IMR-90 (cell line): ENCODE measurements at regions of chr14 and their contacts with region 1.

Region 1: GRCh38 chr14:102893452-102893851 is 29.0 kb upstream of the AMN start:
- DNase-seq: peak; percentile 99
- ATAC-seq: peak; percentile 96
- H3K4me3 ChIP-seq: no peak overlapping the region
- H3K27ac ChIP-seq: no peak overlapping the region
- H3K4me1 ChIP-seq: peaks cover 4% of the 10 kb centered on the region; the same call in 1 of the 2 replicates
- H3K27me3 ChIP-seq: no peaks in the 10 kb centered on the region
- CTCF ChIP-seq: no peak
- POLR2A ChIP-seq: no peak
- RAD21 ChIP-seq: no peak

Region 2: GRCh38 chr14:102774391-102775153 is 118.9 kb before region 1 on chr14:
- CTCF ChIA-PET with region 1: no interaction called
- POLR2A ChIA-PET with region 1: no interaction called
- dilution Hi-C with region 1: no loop called
- in situ Hi-C with region 1: no loop called
- intact Hi-C with region 1: loop called (anchors 1 kb)
- DNase-seq: peak; percentile 78
- ATAC-seq: peak; percentile 56
- H3K4me3 ChIP-seq: no peak overlapping the region
- H3K27ac ChIP-seq: no peak overlapping the region
- H3K4me1 ChIP-seq: peaks cover 10% of the 10 kb centered on the region
- H3K27me3 ChIP-seq: peaks cover 3% of the 10 kb centered on the region; the same call in 1 of the 2 replicates
- CTCF ChIP-seq: peak; percentile 85
- POLR2A ChIP-seq: no peak
- RAD21 ChIP-seq: peak; percentile 76

Region 3: DNA sequence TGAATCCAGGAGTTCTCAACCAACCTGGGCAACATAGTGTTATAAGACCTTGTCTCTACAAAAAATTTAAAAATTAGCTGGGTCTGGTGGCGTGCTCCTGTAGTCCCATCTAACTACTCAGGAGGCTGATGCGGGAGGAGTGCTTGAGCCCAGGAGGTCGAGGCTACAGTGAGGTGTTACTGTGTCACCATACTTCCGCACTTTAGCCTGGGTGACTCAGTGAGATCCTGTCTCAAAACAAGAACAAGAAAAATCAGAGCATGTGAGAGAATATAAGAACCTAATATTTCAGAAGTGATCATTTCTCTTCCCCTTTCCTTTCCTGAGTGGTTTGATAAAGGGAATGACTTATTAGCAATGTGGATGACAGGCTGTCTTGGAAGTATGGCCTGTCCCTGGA is 106.7 kb before region 1 on chr14:
- CTCF ChIA-PET with region 1: no interaction called
- POLR2A ChIA-PET with region 1: no interaction called
- dilution Hi-C with region 1: no loop called
- in situ Hi-C with region 1: loop called (anchors 10 kb)
- intact Hi-C with region 1: no loop called
- DNase-seq: peak; percentile 47
- ATAC-seq: no peak
- H3K4me3 ChIP-seq: no peak overlapping the region
- H3K27ac ChIP-seq: no peak overlapping the region
- H3K4me1 ChIP-seq: peaks cover 11% of the 10 kb centered on the region
- H3K27me3 ChIP-seq: no peaks in the 10 kb centered on the region
- CTCF ChIP-seq: no peak
- POLR2A ChIP-seq: no peak
- RAD21 ChIP-seq: no peak

Region 4: DNA sequence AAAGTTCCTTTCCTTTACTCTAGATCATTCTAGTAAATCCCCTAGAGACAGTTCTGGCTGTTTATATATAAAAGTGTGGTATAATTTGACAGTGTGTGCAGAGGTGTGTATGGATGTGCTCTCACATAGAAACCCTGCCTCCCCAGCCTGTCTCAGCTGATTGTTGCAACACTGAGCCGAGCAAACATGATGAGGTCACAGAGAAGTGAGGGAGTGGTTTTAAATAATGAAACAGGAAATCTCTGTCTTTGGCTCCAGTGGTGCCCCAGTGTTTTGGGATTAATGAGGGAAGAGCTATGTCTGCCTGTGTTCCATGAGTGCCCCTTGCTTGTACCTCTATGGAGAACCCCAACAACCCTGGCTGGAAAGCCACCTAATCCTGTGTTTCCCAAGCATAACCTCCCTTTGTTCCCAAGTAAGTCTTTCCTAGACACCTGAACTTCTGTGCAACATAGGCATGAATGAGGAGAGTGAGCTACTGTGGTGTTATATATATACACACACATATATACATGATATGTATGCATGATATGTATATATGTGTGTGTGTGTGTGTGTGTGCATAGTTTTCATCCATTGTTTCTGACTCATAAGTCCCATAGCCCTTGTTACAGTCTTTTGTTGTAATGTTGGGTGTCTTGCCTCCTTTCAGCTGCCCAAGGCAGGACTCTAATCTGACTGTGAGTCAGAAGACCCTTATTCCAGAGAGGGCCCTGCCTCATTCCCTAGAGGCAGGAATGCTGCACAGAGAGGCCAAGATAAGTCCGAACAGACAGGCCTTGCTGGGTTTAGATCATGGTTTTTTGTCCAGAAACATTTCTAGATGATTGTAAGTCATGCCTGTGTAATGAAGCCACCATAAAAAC is 98.2 kb before region 1 on chr14:
- CTCF ChIA-PET with region 1: no interaction called
- POLR2A ChIA-PET with region 1: no interaction called
- dilution Hi-C with region 1: no loop called
- in situ Hi-C with region 1: no loop called
- intact Hi-C with region 1: loop called (anchors 5 kb)
- DNase-seq: peak; percentile 91
- ATAC-seq: peak; percentile 85
- H3K4me3 ChIP-seq: no peak overlapping the region
- H3K27ac ChIP-seq: peak overlapping the region; percentile 72
- H3K4me1 ChIP-seq: peaks cover 16% of the 10 kb centered on the region
- H3K27me3 ChIP-seq: no peaks in the 10 kb centered on the region
- CTCF ChIP-seq: peak; percentile 62
- POLR2A ChIP-seq: no peak
- RAD21 ChIP-seq: peak; percentile 42